ENCODE measurements at regions of chr20 and their contacts with region 1.

Region 1: GRCh38 chr20:43187476-43188233 is 2.1 kb downstream of the PTPRT start:
- DNase-seq: peak; percentile 38 to 93 (median 86)
- H3K4me3 ChIP-seq: peak overlapping the region; percentile 26 to 71 (median 54)
- H3K27ac ChIP-seq: peak overlapping the region in 36 of 59 donors; percentile 2 to 76 (median 46)
- H3K27me3 ChIP-seq: peaks cover 0 to 33% (median 12%) of the 10 kb centered on the region in 45 donors
- CTCF ChIP-seq: peak; percentile 95 to 100 (median 98)

Region 2: GRCh38 chr20:41738604-41739206 is 1449.0 kb before region 1 on chr20:
- intact Hi-C with region 1: loop called in 1 of 2 experiments (anchors 10 kb)
- DNase-seq: peak; percentile 9 to 77 (median 68)
- H3K4me3 ChIP-seq: no peak overlapping the region
- H3K27ac ChIP-seq: peak overlapping the region in 2 of 59 donors; percentile 26 to 38
- H3K27me3 ChIP-seq: peaks cover 0 to 4% (median 0%) of the 10 kb centered on the region in 45 donors
- CTCF ChIP-seq: peak; percentile 43 to 93 (median 84)

Region 3: GRCh38 chr20:42204203-42204942 is 983.3 kb before region 1 on chr20:
- intact Hi-C with region 1: loop called in 1 of 2 experiments (anchors 5 kb)
- DNase-seq: peak in 2 of 10 donors; percentile 48 to 59
- H3K4me3 ChIP-seq: no peak overlapping the region
- H3K27ac ChIP-seq: no peak overlapping the region
- H3K27me3 ChIP-seq: no peaks in the 10 kb centered on the region
- CTCF ChIP-seq: peak; percentile 49 to 83 (median 71)

Region 4: GRCh38 chr20:42419814-42420532 is 767.7 kb before region 1 on chr20:
- intact Hi-C with region 1: no loop called
- DNase-seq: no peak
- H3K4me3 ChIP-seq: no peak overlapping the region
- H3K27ac ChIP-seq: no peak overlapping the region
- H3K27me3 ChIP-seq: no peaks in the 10 kb centered on the region
- CTCF ChIP-seq: no peak

Region 5: GRCh38 chr20:42775037-42775436 is 412.6 kb before region 1 on chr20:
- intact Hi-C with region 1: loop called (anchors 5 to 10 kb)
- DNase-seq: no peak
- H3K4me3 ChIP-seq: no peak overlapping the region
- H3K27ac ChIP-seq: no peak overlapping the region
- H3K27me3 ChIP-seq: no peaks in the 10 kb centered on the region
- CTCF ChIP-seq: peak in 35 of 56 donors; percentile 7 to 64 (median 34)

Region 6: GRCh38 chr20:42957018-42957703 is 230.5 kb before region 1 on chr20:
- intact Hi-C with region 1: no loop called
- DNase-seq: no peak
- H3K4me3 ChIP-seq: no peak overlapping the region
- H3K27ac ChIP-seq: no peak overlapping the region
- H3K27me3 ChIP-seq: no peaks in the 10 kb centered on the region
- CTCF ChIP-seq: no peak

Region 7: GRCh38 chr20:43068482-43068881 is 119.2 kb before region 1 on chr20:
- intact Hi-C with region 1: loop called in 1 of 2 experiments (anchors 2 kb)
- DNase-seq: no peak
- H3K4me3 ChIP-seq: no peak overlapping the region
- H3K27ac ChIP-seq: no peak overlapping the region
- H3K27me3 ChIP-seq: no peaks in the 10 kb centered on the region
- CTCF ChIP-seq: peak in 29 of 56 donors; percentile 10 to 64 (median 29)

Region 8: DNA sequence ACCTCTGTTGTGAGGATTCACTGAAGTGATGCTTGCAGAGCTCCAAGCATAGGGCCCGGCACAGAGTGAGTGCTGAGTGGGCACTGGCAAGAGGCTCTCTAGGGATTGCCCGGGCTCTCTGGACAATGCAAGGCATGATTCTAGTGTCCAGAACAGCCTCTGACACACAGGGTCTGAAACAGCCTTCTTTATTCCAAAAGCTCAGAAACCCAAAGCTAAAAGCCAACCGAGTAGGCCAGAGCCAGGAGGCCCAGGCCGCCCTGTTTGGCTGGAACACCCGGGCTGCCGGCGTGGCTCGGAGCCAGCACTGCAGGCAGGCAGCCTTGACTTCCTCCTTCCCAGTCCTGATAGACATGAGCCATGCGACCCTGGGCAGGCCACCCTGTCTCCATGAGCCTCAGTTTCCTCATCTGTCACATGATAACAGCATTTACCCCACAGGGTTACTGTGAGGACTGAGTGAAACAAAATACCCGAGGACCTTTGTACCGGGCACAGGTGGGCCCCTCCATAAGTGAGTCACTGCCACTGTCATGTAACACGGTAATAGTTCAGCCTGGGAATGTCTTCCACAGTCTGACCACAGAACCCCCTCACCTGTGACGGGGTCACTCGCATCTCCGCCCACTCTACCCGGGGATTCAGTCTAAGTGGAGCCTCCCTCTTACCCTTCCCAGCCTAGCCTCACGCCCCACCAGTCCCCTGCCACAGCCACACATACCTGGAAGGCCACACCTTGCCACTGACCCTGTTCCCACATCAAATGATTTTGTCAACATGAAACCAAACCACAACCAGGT is 49.4 kb before region 1 on chr20:
- intact Hi-C with region 1: no loop called
- DNase-seq: peak in 6 of 10 donors; percentile 20 to 56 (median 38)
- H3K4me3 ChIP-seq: no peak overlapping the region
- H3K27ac ChIP-seq: peak overlapping the region in 12 of 59 donors; percentile 0 to 64 (median 36)
- H3K27me3 ChIP-seq: no peaks in the 10 kb centered on the region
- CTCF ChIP-seq: no peak

Region 9: GRCh38 chr20:43229696-43230095 is 42.0 kb after region 1 on chr20:
- intact Hi-C with region 1: no loop called
- DNase-seq: no peak
- H3K4me3 ChIP-seq: no peak overlapping the region
- H3K27ac ChIP-seq: no peak overlapping the region
- H3K27me3 ChIP-seq: peaks cover 0 to 4% (median 0%) of the 10 kb centered on the region in 45 donors
- CTCF ChIP-seq: no peak

Region 10: DNA sequence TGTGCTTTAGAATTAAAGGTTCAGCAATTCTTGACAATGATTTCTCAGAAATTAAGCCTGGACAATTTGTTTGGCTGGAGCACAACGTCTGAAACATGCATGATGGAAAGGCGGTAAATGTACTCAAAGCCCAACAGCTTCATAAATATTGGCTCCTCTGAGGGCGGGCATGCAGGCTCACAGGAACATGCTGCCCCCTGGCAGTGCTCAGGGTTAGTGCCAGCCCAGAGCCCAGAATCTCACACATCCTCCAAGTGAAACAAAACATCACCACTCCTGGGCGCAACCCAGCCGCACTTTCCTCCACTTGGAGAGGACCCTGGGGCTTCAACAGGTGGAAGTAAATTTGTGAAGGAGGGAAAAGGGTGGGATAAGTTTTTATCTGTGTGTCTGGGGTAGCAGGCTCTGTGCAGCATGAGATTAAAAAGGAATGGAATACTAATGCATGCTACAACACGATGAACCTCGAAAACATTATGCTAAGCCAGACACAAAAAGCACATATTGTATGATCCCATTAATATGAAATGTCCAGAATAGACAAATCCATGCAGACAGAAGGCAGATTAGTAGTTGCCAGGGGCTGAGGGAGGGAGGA is 56.1 kb after region 1 on chr20:
- intact Hi-C with region 1: loop called in 1 of 2 experiments (anchors 5 kb)
- DNase-seq: peak in 8 of 10 donors; percentile 32 to 64 (median 55)
- H3K4me3 ChIP-seq: peak overlapping the region in 2 of 59 donors; percentile 16 to 25
- H3K27ac ChIP-seq: no peak overlapping the region
- H3K27me3 ChIP-seq: peaks cover 0 to 16% (median 0%) of the 10 kb centered on the region in 45 donors
- CTCF ChIP-seq: peak in 52 of 56 donors; percentile 28 to 72 (median 52)

Measured in dorsolateral prefrontal cortex (tissue), 120 donors.